ENCODE measurements at regions of chr9 and their contacts with region 1.

Region 1: GRCh38 chr9:115978659-115979096 is 174.9 kb upstream of the PAPPA start:
- DNase-seq: no peak
- ATAC-seq: no peak
- H3K4me3 Mint-ChIP-seq: no peak overlapping the region
- H3K27ac Mint-ChIP-seq: no peak overlapping the region
- H3K4me1 Mint-ChIP-seq: no peaks in the 10 kb centered on the region
- H3K27me3 Mint-ChIP-seq: peaks cover 2% of the 10 kb centered on the region

Region 2: GRCh38 chr9:115837618-115838017 is 141.1 kb before region 1 on chr9:
- CTCF ChIA-PET with region 1: no interaction called
- POLR2A ChIA-PET with region 1: no interaction called
- intact Hi-C with region 1: no loop called
- DNase-seq: no peak
- ATAC-seq: no peak
- H3K4me3 Mint-ChIP-seq: no peak overlapping the region
- H3K27ac Mint-ChIP-seq: no peak overlapping the region
- H3K4me1 Mint-ChIP-seq: no peaks in the 10 kb centered on the region
- H3K27me3 Mint-ChIP-seq: no peaks in the 10 kb centered on the region

Region 3: DNA sequence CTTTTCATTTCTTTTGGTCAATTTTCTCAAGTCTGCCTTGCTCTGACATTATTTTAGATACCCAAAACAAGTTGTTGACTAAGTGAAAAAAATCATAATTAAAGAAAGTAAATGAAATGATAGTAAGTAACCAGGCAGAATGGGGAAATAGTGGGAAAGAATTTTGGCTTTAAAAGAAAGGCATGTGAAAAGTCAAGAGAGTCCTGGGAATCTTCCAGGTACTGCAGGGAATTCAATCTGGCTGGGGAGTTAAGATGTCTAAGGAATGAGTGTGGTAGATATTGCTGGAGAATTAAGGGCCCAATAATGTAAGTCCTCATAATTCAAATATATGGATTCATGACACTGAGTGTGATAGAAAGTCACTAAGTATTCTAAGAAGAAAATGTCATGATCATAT is 51.8 kb after region 1 on chr9:
- CTCF ChIA-PET with region 1: no interaction called
- POLR2A ChIA-PET with region 1: no interaction called
- intact Hi-C with region 1: loop called in 1 of 2 experiments (anchors 10 kb)
- DNase-seq: no peak
- ATAC-seq: no peak
- H3K4me3 Mint-ChIP-seq: no peak overlapping the region
- H3K27ac Mint-ChIP-seq: no peak overlapping the region
- H3K4me1 Mint-ChIP-seq: no peaks in the 10 kb centered on the region
- H3K27me3 Mint-ChIP-seq: no peaks in the 10 kb centered on the region

Measured in activated CD4-positive, alpha-beta T cell treated with anti-CD3 and anti-CD28 coated beads for 36 hours (primary cell).